Right ventricle myocardium superior (tissue), 1 donor: ENCODE measurements at regions of chr1 and their contacts with region 1.

Region 1: DNA sequence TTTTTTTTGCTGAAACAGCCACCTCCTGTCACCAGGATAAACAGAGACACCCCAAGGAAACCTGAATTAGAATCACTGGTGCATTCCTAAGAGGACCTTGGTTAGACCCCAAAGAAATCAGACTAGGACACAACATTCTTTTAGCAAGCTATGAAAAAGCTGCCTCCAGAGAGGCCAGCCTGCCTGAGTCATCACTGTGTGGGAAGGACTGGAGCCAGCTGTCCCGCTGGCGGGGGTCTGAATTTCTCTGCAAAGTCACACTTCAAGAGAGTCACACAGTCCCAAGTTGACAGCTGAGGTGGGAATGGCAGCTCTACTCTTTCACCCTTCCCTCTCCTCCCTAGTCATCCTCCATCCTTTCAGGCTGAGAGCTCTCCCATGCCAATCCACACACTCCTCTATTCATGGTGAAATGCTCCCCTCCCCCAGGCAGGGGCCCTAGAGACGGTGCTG is 405.0 kb upstream of the POU3F1 start:
- DNase-seq: no peak
- ATAC-seq: no peak

Region 2: GRCh38 chr1:38671221-38671620 is 219.7 kb after region 1 on chr1:
- intact Hi-C with region 1: loop called (anchors 10 kb)
- DNase-seq: no peak
- ATAC-seq: no peak